Activated T-helper 1 cell treated with anti-CD3 and anti-CD28 coated beads, Interleukin-12 subunit alpha, Interleukin-12 subunit beta, Interleukin-2, Interleukin-4 antibody, amounts not matched to agents 30 ng/mL and 10 ng/mL and 1 ng/mL, durations not matched to agents 14 hours and 24 hours and 36 hours (primary cell): ENCODE measurements at regions of chr4 and their contacts with region 1.

Region 1: DNA sequence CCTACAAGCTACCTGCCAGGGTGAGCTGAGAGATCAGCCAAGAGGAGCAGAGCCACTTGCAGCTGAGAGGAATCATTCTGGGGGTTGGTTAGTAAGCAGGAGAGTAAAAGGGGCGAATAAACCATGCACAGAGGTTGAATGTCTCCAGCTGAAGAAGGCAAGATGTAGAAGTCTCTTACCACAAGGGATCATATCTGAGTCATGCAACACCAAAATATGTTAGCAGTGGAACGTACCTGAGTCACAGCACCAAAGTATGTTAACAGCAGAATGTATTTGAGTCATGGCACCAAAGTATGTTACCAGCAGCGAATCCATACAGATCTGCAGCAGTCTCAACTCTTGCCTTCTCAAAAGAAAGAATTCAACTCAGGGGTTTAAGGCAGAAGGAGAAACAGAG is 29.9 kb downstream of the C4orf51 start:
- DNase-seq: no peak
- H3K4me3 Mint-ChIP-seq: no peak overlapping the region
- H3K27ac Mint-ChIP-seq: peak overlapping the region; percentile 33
- H3K4me1 Mint-ChIP-seq: peaks cover 19% of the 10 kb centered on the region
- H3K27me3 Mint-ChIP-seq: no peaks in the 10 kb centered on the region

Region 2: GRCh38 chr4:145679520-145679919 is 30.3 kb before region 1 on chr4:
- intact Hi-C with region 1: loop called (anchors 2 kb)
- DNase-seq: no peak
- H3K4me3 Mint-ChIP-seq: no peak overlapping the region
- H3K27ac Mint-ChIP-seq: no peak overlapping the region
- H3K4me1 Mint-ChIP-seq: no peaks in the 10 kb centered on the region
- H3K27me3 Mint-ChIP-seq: peaks cover 14% of the 10 kb centered on the region

Region 3: GRCh38 chr4:145719752-145720624 is 10.1 kb after region 1 on chr4:
- intact Hi-C with region 1: loop called (anchors 1 kb)
- DNase-seq: no peak
- H3K4me3 Mint-ChIP-seq: no peak overlapping the region
- H3K27ac Mint-ChIP-seq: peak overlapping the region; percentile 13
- H3K4me1 Mint-ChIP-seq: peaks cover 15% of the 10 kb centered on the region
- H3K27me3 Mint-ChIP-seq: peaks cover 2% of the 10 kb centered on the region

Region 4: DNA sequence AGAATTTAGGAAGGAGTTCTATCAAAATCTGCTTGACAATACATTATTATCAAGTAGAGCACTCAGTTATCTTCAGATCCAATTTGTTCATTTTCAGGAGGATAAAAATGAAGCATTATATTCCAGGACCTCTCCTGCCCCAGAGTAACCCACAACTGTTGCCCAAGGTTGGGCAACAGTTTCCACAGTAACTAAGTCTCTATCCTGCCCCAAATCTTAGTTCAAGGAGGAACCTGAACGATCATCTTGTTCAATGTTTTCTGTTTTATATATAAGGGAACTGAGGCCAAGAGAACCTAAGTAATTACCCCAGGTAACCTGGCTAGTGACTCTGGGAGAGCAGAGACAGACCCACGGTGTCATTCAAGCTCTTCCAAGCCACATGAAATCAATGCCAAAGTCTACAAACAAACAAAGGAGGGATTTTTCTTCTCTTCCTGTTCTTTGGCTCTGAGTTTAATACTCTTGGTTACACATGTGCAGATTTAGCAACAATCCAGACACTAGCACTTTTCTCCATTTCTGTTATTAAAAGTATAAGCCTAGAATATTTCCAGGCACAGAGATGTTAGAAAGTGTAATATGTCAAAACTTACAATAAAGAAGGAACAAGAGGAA is 75.7 kb after region 1 on chr4:
- intact Hi-C with region 1: loop called (anchors 1 kb)
- DNase-seq: no peak
- H3K4me3 Mint-ChIP-seq: no peak overlapping the region
- H3K27ac Mint-ChIP-seq: peak overlapping the region; percentile 72
- H3K4me1 Mint-ChIP-seq: peaks cover 49% of the 10 kb centered on the region
- H3K27me3 Mint-ChIP-seq: no peaks in the 10 kb centered on the region

Region 5: DNA sequence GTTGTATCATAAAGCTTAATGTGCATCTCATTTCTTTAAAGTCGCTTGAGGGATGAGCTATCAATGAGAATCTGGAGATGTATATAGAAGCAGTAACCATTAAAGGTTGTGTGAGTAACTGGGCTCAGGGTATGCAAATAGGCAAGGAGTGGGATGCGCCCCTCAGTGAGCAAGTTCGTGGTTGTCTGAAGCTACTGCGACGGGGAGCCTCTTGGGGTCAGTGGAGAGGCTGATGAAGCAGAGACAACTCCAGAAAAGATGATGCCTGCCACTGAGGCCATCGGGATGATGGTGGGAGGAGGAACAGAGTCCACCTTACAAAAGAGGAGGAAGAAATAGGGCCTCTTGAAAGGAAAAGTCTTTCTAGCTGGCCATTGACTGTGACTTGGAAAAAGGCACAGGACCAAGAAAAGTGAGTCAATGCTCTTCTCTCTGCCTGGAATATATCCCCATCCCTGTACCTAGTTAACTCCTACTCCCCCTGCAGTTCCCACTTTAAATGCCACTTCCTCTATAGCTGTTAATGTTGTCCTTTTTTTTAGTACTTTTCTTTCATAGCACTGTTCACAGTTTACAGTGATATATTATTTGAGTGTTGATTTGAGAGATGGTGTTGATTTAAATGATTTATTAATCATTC is 414.3 kb after region 1 on chr4:
- intact Hi-C with region 1: no loop called
- DNase-seq: no peak
- H3K4me3 Mint-ChIP-seq: no peak overlapping the region
- H3K27ac Mint-ChIP-seq: no peak overlapping the region
- H3K4me1 Mint-ChIP-seq: peaks cover 13% of the 10 kb centered on the region
- H3K27me3 Mint-ChIP-seq: peaks cover 7% of the 10 kb centered on the region